Gastrocnemius medialis (tissue), 4 donors: ENCODE measurements at regions of chr2 and their contacts with region 1.

Region 1: GRCh38 chr2:54115284-54116137 is at the start of gene ACYP2:
- DNase-seq: peak; percentile 94 to 95
- ATAC-seq: peak; percentile 96 to 98
- H3K4me3 ChIP-seq: peak within 1 kb of the TSS; percentile 70 to 89 (median 76)
- H3K27ac ChIP-seq: peak within 1 kb of the TSS; percentile 97 to 99 (median 98)
- H3K4me1 ChIP-seq: peaks cover 10 to 16% of the 10 kb centered on the region in 2 donors
- H3K27me3 ChIP-seq: no peaks in the 10 kb centered on the region
- CTCF ChIP-seq: no peak
- POLR2A ChIP-seq: peak; percentile 83 to 85
- total RNA-seq, gene ACYP2: 52.9 to 121 (median 107) TPM

Region 2: GRCh38 chr2:54330162-54330925 is 214.8 kb after region 1 on chr2:
- in situ Hi-C with region 1: no loop called
- intact Hi-C with region 1: loop called (anchors 5 kb)
- DNase-seq: peak; percentile 88 to 92
- ATAC-seq: peak; percentile 95 to 97
- H3K4me3 ChIP-seq: peak overlapping the region; percentile 68 to 82 (median 78)
- H3K27ac ChIP-seq: peak overlapping the region; percentile 88 to 92 (median 90)
- H3K4me1 ChIP-seq: peaks cover 12% of the 10 kb centered on the region in 2 donors
- H3K27me3 ChIP-seq: no peaks in the 10 kb centered on the region
- CTCF ChIP-seq: no peak
- POLR2A ChIP-seq: peak; percentile 91 to 95

Region 3: DNA sequence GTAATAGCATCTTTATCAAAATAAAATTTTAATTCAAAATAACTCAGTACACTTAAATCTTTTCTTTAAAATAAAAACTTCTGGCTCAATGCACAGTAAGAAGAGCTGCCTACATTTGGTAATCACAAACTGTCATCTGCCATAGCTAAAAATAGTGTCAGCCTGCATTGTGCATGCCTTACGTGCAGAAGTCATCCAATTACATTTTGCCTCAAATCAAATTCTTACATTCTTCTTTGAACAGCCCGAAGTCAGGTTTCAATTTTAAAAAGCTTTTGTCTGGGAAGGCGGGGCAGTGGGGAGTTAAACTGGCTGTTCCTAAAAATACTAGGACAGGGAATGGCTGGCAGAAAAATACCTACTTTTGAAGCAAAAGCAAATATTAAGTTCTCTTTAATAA is 883.7 kb after region 1 on chr2:
- in situ Hi-C with region 1: loop called in 1 of 4 experiments (anchors 25 kb)
- intact Hi-C with region 1: no loop called
- DNase-seq: peak; percentile 40 to 50
- ATAC-seq: peak; percentile 88 to 89
- H3K4me3 ChIP-seq: peak overlapping the region; percentile 28 to 56 (median 44)
- H3K27ac ChIP-seq: peak overlapping the region; percentile 89 to 94 (median 91)
- H3K4me1 ChIP-seq: peaks cover 86 to 89% of the 10 kb centered on the region in 2 donors
- H3K27me3 ChIP-seq: no peaks in the 10 kb centered on the region
- CTCF ChIP-seq: no peak
- POLR2A ChIP-seq: peak in 1 of 2 donors; percentile 42